SK-N-SH (cell line): ENCODE measurements at regions of chr17 and their contacts with region 1.

Region 1: GRCh38 chr17:4215882-4216570 is 47.8 kb downstream of the ANKFY1 start:
- DNase-seq: peak; percentile 18
- H3K4me3 ChIP-seq: no peak overlapping the region
- H3K27ac ChIP-seq: peak overlapping the region in 1 of 2 experiments; percentile 18; a peak in 1 of 4 replicates
- H3K4me1 ChIP-seq: peaks cover 8 to 22% of the 10 kb centered on the region in 2 experiments; a peak in 3 of 4 replicates
- H3K27me3 ChIP-seq: no peaks in the 10 kb centered on the region
- CTCF ChIP-seq: no peak
- EP300 ChIP-seq: no peak
- RAD21 ChIP-seq: no peak

Region 2: GRCh38 chr17:4167786-4168185 is 48.2 kb before region 1 on chr17:
- CTCF ChIA-PET with region 1: no interaction called
- POLR2A ChIA-PET with region 1: no interaction called
- DNase-seq: no peak
- H3K4me3 ChIP-seq: no peak overlapping the region
- H3K27ac ChIP-seq: no peak overlapping the region
- H3K4me1 ChIP-seq: peaks cover 0 to 5% of the 10 kb centered on the region in 2 experiments; a peak in 1 of 4 replicates
- H3K27me3 ChIP-seq: no peaks in the 10 kb centered on the region
- CTCF ChIP-seq: no peak
- EP300 ChIP-seq: no peak
- RAD21 ChIP-seq: no peak

Region 3: GRCh38 chr17:4229627-4230541 is 13.9 kb after region 1 on chr17:
- CTCF ChIA-PET with region 1: interaction called, 18 read pairs
- POLR2A ChIA-PET with region 1: no interaction called
- DNase-seq: no peak
- H3K4me3 ChIP-seq: peak overlapping the region in 1 of 2 experiments; percentile 17; a peak in 1 of 4 replicates
- H3K27ac ChIP-seq: peak overlapping the region; percentile 88 to 98
- H3K4me1 ChIP-seq: peaks cover 3 to 26% of the 10 kb centered on the region in 2 experiments
- H3K27me3 ChIP-seq: no peaks in the 10 kb centered on the region
- CTCF ChIP-seq: no peak
- EP300 ChIP-seq: peak in 1 of 2 experiments; percentile 87; a peak in 2 of 4 replicates
- RAD21 ChIP-seq: no peak

Region 4: DNA sequence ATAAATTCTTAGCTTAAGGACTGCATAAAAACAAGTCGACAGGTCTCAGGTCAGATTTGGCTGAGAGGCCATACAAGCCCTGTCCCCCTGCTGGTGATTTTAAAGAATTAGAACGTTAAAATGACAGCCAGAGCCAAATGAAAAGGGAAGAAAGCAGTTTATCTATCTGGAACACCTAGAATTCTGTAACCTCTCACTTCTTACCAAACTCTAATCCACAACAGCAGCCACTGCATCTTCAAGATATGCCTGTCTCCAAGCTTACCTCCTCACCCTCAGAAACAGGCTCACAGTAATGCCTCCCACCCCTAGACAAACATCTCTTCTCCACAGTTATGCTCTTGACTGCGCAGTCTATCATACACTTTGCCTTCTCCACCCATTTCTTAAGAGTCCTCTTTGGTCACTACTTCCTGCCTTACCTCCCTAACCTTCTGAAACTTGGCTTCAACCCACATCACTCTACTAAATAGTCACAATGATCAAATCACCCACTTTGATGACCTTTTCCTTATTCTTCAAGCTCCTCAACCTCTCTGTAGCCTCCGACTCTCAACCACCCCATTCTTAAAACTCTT is 33.5 kb after region 1 on chr17:
- CTCF ChIA-PET with region 1: interaction called, 24 read pairs
- POLR2A ChIA-PET with region 1: no interaction called
- DNase-seq: peak; percentile 58
- H3K4me3 ChIP-seq: no peak overlapping the region
- H3K27ac ChIP-seq: no peak overlapping the region
- H3K4me1 ChIP-seq: no peaks in the 10 kb centered on the region; a peak in 1 of 4 replicates
- H3K27me3 ChIP-seq: no peaks in the 10 kb centered on the region
- CTCF ChIP-seq: peak; percentile 64
- EP300 ChIP-seq: no peak
- RAD21 ChIP-seq: peak; percentile 48

Region 5: GRCh38 chr17:4366327-4367063 is 150.5 kb after region 1 on chr17 and contains the start of gene UBE2G1:
- CTCF ChIA-PET with region 1: interaction called, 18 read pairs
- POLR2A ChIA-PET with region 1: no interaction called
- DNase-seq: peak; percentile 98
- H3K4me3 ChIP-seq: peak within 1 kb of the TSS; percentile 72 to 89
- H3K27ac ChIP-seq: peak within 1 kb of the TSS; percentile 78 to 89
- H3K4me1 ChIP-seq: peaks cover 3 to 4% of the 10 kb centered on the region in 2 experiments; a peak in 1 of 4 replicates
- H3K27me3 ChIP-seq: no peaks in the 10 kb centered on the region
- CTCF ChIP-seq: peak; percentile 59
- EP300 ChIP-seq: no peak
- RAD21 ChIP-seq: peak; percentile 86
- polyA plus RNA-seq, gene UBE2G1: 23.2 and 26.2 TPM in 2 replicates

Region 6: GRCh38 chr17:4412933-4413831 is 197.2 kb after region 1 on chr17:
- CTCF ChIA-PET with region 1: interaction called, 42 read pairs
- POLR2A ChIA-PET with region 1: no interaction called
- DNase-seq: peak; percentile 85
- H3K4me3 ChIP-seq: peak overlapping the region in 1 of 2 experiments; percentile 51; a peak in 1 of 4 replicates
- H3K27ac ChIP-seq: no peak overlapping the region
- H3K4me1 ChIP-seq: no peaks in the 10 kb centered on the region; a peak in 1 of 4 replicates
- H3K27me3 ChIP-seq: no peaks in the 10 kb centered on the region
- CTCF ChIP-seq: peak; percentile 89
- EP300 ChIP-seq: no peak
- RAD21 ChIP-seq: peak; percentile 97